Cardiac septum (tissue), 1 donor: ENCODE measurements at regions of chr19 and their contacts with region 1.

Region 1: GRCh38 chr19:32570081-32570785 is 10.8 kb upstream of the PDCD5 start:
- DNase-seq: no peak

Region 2: DNA sequence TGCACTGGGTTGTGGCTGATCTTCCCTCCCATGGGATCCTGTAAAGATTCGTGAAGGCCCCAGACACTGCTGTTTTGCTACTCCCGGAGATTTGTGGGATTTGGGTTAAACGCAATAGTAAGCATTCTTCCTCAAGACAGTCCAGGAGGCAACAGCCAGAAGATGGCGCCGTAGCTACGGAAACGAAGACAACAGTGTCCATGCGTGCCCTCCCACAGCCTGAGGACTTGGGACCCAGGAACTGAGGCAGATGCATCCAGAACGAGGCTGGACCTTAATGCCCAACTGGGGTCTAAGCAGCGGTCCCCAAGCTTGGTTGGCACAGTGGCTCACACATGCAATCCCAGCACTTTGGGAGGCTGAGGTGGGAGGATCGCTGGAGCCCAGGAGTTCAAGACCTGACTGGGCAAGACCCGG is 282.4 kb before region 1 on chr19:
- intact Hi-C with region 1: loop called (anchors 5 kb)
- DNase-seq: peak; percentile 75

Region 3: DNA sequence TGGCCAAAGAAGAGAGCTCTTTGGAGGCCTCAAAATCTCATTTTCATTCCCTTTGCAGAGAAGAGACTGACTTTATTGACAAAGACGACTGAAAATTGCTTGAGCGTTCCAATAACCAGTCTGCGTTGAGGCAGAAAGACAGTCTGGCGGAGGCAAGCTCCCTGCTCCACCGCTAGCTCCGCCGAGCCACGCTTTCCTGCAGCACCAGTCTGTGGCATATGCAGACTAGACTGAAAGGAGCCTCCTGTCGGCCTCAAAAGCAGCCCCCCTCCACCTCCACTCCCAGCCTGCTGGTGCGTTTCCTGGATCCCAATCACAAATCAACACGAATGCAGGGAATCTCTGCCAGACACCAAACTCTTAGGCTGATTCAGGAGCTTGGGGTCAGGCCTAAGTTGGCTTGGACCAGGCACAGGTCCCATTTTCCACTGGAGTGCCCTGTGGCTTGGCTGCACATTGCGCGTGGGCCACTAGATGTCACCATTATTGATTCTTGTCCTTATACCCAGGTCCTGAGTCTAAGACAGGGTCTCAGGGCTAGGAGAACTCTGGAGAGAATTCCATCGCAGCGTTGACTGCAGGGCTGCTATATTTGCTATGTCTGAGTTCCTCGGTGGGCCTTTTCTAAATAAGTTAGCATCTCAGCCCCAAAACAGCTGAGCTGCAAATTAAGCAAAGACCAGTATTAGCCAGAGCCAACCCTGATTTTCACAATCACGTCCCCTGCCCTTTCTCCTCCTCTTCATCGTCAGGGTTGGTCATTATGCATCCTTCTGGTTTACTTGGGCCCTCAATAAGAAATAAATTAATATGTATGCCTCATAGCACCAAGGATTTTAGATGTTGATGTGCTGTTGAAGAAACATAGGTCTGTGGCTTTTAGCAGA is 230.0 kb before region 1 on chr19:
- intact Hi-C with region 1: loop called (anchors 5 kb)
- DNase-seq: no peak

Region 4: DNA sequence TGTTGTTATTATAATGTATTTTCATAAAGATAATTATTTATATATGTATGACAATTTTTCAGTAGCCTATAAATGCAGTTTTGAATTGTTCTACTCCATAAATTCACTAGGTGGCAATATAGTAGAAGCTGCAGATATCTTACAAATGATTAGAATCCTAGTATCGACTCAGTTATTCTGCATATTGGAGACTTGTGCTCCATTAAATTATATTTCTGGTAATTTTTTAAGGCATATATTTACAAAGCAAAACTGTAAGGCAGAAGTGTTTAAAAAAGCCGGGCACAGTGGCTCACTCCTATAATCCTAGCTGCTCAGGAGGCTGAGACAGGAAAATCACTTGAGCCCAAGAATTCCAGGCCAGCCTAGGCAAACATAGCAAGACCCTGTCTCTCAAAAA is 106.0 kb before region 1 on chr19:
- intact Hi-C with region 1: no loop called
- DNase-seq: no peak

Region 5: GRCh38 chr19:32598022-32598421 is 27.8 kb after region 1 on chr19:
- intact Hi-C with region 1: no loop called
- DNase-seq: no peak

Region 6: DNA sequence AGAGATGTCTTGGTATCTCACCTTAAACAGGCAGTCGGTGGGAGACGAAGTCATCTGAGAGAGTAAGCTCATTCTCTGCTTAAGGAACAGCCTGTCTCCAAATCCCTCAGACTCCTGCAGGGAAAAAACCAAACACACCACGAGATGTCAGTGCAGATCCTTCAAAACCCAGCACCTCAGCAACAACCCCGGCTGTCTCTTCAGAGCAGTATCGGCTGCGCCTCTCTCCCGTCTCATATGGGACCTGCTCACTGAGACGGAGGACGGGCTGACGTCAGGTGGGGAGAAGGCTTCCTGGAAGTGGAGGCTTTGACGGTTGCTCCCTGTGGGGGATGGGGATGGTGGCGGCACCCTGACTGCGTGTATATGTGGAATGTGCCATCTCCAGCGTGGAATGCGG is 61.1 kb after region 1 on chr19:
- intact Hi-C with region 1: no loop called
- DNase-seq: no peak